Aorta (tissue), 5 donors: ENCODE measurements at regions of chr4 and their contacts with region 1.

Region 1: DNA sequence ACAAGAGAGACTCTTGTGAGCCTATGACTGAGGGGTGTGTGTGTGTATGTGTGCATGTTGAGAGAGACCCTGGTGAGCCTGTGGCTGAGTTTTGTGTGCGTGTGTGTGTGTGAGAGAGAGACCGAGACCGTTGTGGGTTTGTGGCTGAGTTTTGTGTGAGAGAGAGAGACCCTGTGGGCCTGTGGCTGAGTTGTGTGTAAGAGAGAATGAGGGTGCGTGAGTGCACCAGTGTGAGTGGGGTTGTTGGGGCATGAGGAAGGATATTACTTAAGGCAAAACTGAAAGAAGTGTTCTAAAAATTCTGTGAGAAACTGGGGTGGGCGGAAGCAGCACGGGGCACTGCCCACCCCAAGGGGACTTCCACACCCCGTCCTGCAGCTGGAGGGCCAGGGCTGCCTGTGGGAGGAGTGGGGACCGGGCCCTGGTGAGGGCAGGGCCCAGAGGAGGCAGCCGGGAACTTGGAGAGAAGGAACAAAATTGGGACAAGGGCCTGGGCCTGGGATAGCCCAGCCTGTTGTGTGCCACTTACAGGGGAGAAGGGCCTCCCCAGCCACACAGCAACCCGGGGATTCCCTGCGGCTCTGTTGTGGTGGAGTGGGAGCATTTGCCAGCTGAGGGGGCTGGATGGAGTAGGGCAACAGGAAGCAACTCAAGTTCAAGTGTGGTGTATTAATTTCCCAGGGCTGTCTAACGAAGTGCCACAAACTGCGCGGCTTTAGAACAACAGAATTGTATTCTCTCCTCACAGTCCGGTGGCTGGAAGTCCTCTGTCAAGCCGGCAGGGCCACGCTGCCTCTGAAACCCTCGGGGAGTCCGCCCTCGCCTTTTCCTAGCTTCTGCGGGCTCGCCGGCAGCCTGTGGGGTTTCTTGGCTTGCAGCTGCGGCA is 22.1 kb downstream of the TMEM131L start:
- DNase-seq: peak in 1 of 2 donors; percentile 62
- ATAC-seq: peak; percentile 67
- H3K4me3 ChIP-seq: no peak overlapping the region
- H3K27ac ChIP-seq: peak overlapping the region; percentile 36 to 80
- H3K4me1 ChIP-seq: peaks cover 0 to 6% of the 10 kb centered on the region in 2 donors
- H3K27me3 ChIP-seq: no peaks in the 10 kb centered on the region

Region 2: DNA sequence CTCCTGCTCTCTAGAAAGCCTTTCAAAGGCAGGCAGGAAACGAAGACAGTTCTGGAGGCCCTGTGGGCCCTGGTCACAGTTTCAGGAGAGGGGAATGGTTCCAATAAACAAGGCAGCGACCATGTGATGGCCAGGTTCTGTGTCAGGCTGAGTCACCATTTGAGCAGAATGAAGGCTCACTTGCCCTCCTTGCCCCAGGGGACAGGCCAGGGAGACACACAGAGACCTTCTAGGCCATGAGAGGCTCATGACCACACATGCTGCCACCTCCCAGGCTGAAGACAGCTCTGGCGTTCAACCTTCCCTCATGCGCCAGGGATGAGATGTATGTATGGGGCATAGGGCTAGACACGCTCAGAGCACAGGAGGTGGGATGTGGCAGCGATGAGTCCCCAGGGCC is 307.0 kb before region 1 on chr4:
- intact Hi-C with region 1: no loop called
- DNase-seq: no peak
- ATAC-seq: no peak
- H3K4me3 ChIP-seq: no peak overlapping the region
- H3K27ac ChIP-seq: no peak overlapping the region
- H3K4me1 ChIP-seq: no peaks in the 10 kb centered on the region
- H3K27me3 ChIP-seq: no peaks in the 10 kb centered on the region

Region 3: GRCh38 chr4:153281476-153281875 is 206.8 kb before region 1 on chr4:
- intact Hi-C with region 1: no loop called
- DNase-seq: no peak
- ATAC-seq: no peak
- H3K4me3 ChIP-seq: no peak overlapping the region
- H3K27ac ChIP-seq: no peak overlapping the region
- H3K4me1 ChIP-seq: no peaks in the 10 kb centered on the region
- H3K27me3 ChIP-seq: no peaks in the 10 kb centered on the region

Region 4: DNA sequence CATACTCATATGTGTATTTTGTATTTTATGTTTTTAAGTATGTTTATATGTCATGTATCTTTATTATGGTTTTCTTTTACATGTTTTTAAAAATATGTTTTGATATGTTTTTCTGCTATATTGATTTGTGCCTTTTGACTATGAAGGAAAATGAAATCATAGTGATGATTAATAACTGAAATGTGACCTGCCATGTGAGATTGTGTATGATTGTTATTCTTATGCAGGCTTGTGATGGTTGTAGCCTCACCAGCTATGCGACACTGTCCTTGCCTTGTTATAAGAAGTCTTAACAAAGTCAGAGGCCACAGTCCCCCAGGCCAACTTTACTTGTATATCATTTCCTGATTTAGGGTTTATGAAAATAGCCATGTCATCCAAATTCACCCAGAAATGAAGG is 61.2 kb after region 1 on chr4:
- intact Hi-C with region 1: loop called in 1 of 2 experiments (anchors 5 kb)
- DNase-seq: no peak
- ATAC-seq: no peak
- H3K4me3 ChIP-seq: no peak overlapping the region
- H3K27ac ChIP-seq: no peak overlapping the region
- H3K4me1 ChIP-seq: peaks cover 0 to 5% of the 10 kb centered on the region in 2 donors
- H3K27me3 ChIP-seq: no peaks in the 10 kb centered on the region